Stomach (tissue), 19 donors: ENCODE measurements at regions of chr15 and their contacts with region 1.

Region 1: GRCh38 chr15:58086491-58086890 is 21.0 kb upstream of the ALDH1A2 start:
- DNase-seq: no peak
- H3K4me3 ChIP-seq: no peak overlapping the region
- H3K27ac ChIP-seq: no peak overlapping the region
- H3K4me1 ChIP-seq: no peaks in the 10 kb centered on the region
- H3K27me3 ChIP-seq: no peaks in the 10 kb centered on the region
- CTCF ChIP-seq: no peak
- EP300 ChIP-seq: no peak
- POLR2A ChIP-seq: no peak

Region 2: DNA sequence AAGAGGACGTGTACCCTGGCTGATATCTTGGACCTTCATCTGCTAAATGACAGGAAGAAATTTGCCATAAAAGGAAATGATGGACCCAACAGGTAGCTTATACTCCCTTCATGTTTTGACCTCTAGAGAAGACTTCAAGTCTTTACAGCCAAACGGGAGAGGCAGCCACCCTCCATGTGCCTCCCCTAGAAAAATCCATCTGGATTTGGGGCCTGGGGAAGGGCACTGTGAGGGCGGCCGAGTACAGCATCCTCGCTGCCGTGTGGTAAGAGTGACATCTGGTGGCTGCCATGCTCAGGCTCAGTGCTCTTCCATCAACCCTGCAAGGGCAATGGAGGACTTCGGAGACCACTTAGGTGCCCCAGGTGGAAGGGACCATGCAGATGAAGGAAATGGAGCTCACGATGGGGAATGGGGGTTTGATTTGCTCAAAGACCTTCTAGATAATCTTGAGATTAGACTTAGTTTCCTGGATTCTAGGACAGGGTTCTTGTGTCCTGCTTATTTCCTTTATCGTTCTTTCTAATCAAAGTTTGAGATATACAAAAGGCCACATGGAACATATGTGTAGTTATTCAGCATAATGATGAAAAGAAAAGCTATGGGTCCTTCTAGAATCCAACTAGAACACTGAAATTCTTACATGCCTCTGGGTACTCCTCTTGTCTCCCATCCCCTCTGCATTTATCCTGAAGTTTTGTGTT is 96.1 kb after region 1 on chr15:
- intact Hi-C with region 1: loop called (anchors 10 kb)
- DNase-seq: peak; percentile 31 to 82
- H3K4me3 ChIP-seq: no peak overlapping the region
- H3K27ac ChIP-seq: no peak overlapping the region
- H3K4me1 ChIP-seq: no peaks in the 10 kb centered on the region
- H3K27me3 ChIP-seq: peaks cover 0 to 17% (median 0%) of the 10 kb centered on the region in 3 donors
- CTCF ChIP-seq: peak in 5 of 7 experiments; percentile 38 to 71 (median 58)
- EP300 ChIP-seq: no peak
- POLR2A ChIP-seq: no peak